CD8-positive, alpha-beta T cell (primary cell): ENCODE measurements at regions of chr11 and their contacts with region 1.

Region 1: GRCh38 chr11:86608251-86608799 is 64.1 kb downstream of the ME3 start:
- DNase-seq: peak in 4 of 9 experiments; percentile 11 to 61 (median 34)
- ATAC-seq: no peak
- H3K4me3 ChIP-seq: no peak overlapping the region
- H3K4me3 Mint-ChIP-seq: no peak overlapping the region
- H3K27ac ChIP-seq: no peak overlapping the region
- H3K27ac Mint-ChIP-seq: no peak overlapping the region
- H3K4me1 ChIP-seq: no peaks in the 10 kb centered on the region
- H3K4me1 Mint-ChIP-seq: no peaks in the 10 kb centered on the region
- H3K27me3 ChIP-seq: no peaks in the 10 kb centered on the region
- H3K27me3 Mint-ChIP-seq: no peaks in the 10 kb centered on the region
- CTCF ChIP-seq: peak; percentile 57

Region 2: GRCh38 chr11:86818466-86819192 is 210.3 kb after region 1 on chr11:
- CTCF ChIA-PET with region 1: no interaction called
- POLR2A ChIA-PET with region 1: no interaction called
- intact Hi-C with region 1: loop called in 1 of 2 experiments (anchors 1 kb)
- DNase-seq: peak in 2 of 9 experiments; percentile 57 to 69
- ATAC-seq: no peak
- H3K4me3 ChIP-seq: no peak overlapping the region
- H3K4me3 Mint-ChIP-seq: no peak overlapping the region
- H3K27ac ChIP-seq: no peak overlapping the region
- H3K27ac Mint-ChIP-seq: no peak overlapping the region
- H3K4me1 ChIP-seq: no peaks in the 10 kb centered on the region
- H3K4me1 Mint-ChIP-seq: peaks cover 3% of the 10 kb centered on the region
- H3K27me3 ChIP-seq: no peaks in the 10 kb centered on the region
- H3K27me3 Mint-ChIP-seq: peaks cover 14% of the 10 kb centered on the region
- CTCF ChIP-seq: peak; percentile 74